ENCODE measurements at regions of chr12 and their contacts with region 1.

Region 1: GRCh38 chr12:93121729-93122488 is 192.8 kb upstream of the EEA1 start:
- DNase-seq: peak in 1 of 2 experiments; percentile 42
- H3K4me3 ChIP-seq: no peak overlapping the region
- H3K27ac ChIP-seq: peak overlapping the region; percentile 75
- H3K4me1 ChIP-seq: peaks cover 18% of the 10 kb centered on the region
- H3K27me3 ChIP-seq: no peaks in the 10 kb centered on the region
- CTCF ChIP-seq: no peak

Region 2: DNA sequence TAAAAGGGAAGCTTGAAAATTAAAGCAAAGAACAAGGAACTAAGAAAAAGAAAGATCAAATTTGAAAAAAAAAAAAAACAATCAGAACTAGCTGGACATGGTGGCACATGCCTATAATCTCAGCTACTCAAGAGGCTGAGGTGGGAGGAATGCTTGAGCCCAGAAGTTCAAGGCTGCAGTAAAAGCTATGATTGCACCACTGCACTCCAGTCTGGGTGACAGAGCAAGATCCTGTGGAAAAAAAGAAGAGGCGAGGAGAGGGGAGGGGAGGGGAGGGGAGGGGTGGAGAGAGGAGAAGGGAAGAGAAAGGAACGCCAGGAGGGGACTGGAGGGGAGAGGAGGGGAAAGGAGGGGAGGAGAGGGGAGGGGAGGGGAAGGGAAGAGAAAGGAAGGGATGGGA is 235.8 kb before region 1 on chr12:
- CTCF ChIA-PET with region 1: no interaction called
- POLR2A ChIA-PET with region 1: no interaction called
- intact Hi-C with region 1: no loop called
- DNase-seq: no peak
- H3K4me3 ChIP-seq: no peak overlapping the region
- H3K27ac ChIP-seq: no peak overlapping the region
- H3K4me1 ChIP-seq: no peaks in the 10 kb centered on the region
- H3K27me3 ChIP-seq: no peaks in the 10 kb centered on the region
- CTCF ChIP-seq: no peak

Region 3: GRCh38 chr12:93109551-93110203 is 12.2 kb before region 1 on chr12:
- CTCF ChIA-PET with region 1: interaction called, 12 read pairs
- POLR2A ChIA-PET with region 1: no interaction called
- intact Hi-C with region 1: no loop called
- DNase-seq: no peak
- H3K4me3 ChIP-seq: no peak overlapping the region
- H3K27ac ChIP-seq: no peak overlapping the region
- H3K4me1 ChIP-seq: peaks cover 7% of the 10 kb centered on the region
- H3K27me3 ChIP-seq: no peaks in the 10 kb centered on the region
- CTCF ChIP-seq: no peak

Region 4: DNA sequence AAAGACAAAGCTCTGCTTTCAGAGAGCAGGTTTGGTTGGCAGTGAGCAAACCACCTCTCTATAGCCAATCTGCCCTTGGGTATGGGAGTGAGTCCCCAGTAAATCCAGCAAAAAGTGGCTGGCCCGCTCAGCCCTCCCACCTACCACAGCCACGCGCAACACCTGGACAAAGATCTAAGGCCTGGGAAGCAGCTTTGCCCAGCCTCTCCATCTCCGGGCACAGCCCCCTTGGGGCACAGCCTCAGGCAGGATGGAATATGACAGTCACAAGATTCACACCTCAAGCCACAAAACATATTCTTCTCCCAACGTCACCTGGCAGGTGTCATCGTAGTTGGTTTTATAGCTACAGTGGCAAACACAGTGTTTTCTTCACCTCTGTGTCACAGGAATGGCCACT is 18.9 kb after region 1 on chr12:
- CTCF ChIA-PET with region 1: no interaction called
- POLR2A ChIA-PET with region 1: no interaction called
- intact Hi-C with region 1: no loop called
- DNase-seq: no peak
- H3K4me3 ChIP-seq: no peak overlapping the region
- H3K27ac ChIP-seq: no peak overlapping the region
- H3K4me1 ChIP-seq: peaks cover 65% of the 10 kb centered on the region
- H3K27me3 ChIP-seq: no peaks in the 10 kb centered on the region
- CTCF ChIP-seq: no peak

Region 5: DNA sequence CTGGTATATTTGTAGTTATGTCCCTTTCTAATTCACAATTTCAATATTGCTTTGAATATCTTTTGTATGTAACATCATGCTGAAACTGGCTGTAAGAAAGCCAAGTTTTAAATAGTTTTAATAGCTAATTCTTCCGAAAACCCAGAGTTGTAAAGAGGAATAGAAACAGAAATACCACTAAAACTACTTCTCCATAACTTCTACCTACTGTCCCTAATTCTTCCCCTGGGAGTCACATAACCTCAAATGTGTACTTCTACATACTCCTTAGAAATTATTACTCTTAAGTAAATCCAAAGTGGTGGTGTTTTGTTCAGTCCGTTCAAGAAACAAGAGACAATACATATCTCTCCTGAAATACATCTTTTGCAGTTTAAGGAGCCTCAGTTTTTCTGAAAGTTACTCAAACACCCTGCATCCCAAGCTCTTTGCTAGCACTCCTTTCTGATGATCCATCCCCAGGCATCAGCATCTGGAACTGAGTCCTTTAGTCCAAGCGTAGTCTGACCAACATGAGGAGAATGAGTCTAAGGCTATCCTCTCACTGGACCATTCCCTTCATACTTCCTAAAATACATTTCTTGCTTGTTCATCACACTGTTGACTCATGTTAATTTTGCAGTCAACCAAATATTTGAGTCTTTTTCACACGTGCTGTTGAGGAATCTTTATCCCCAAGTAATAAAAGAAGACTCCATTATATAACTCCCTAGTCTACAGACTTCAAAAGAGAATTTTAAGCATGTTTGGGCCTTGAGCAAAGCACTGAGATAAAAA is 41.5 kb after region 1 on chr12:
- CTCF ChIA-PET with region 1: no interaction called
- POLR2A ChIA-PET with region 1: no interaction called
- intact Hi-C with region 1: no loop called
- DNase-seq: peak in 1 of 2 experiments; percentile 66
- H3K4me3 ChIP-seq: no peak overlapping the region
- H3K27ac ChIP-seq: peak overlapping the region; percentile 57
- H3K4me1 ChIP-seq: peaks cover 20% of the 10 kb centered on the region
- H3K27me3 ChIP-seq: no peaks in the 10 kb centered on the region
- CTCF ChIP-seq: no peak

Region 6: DNA sequence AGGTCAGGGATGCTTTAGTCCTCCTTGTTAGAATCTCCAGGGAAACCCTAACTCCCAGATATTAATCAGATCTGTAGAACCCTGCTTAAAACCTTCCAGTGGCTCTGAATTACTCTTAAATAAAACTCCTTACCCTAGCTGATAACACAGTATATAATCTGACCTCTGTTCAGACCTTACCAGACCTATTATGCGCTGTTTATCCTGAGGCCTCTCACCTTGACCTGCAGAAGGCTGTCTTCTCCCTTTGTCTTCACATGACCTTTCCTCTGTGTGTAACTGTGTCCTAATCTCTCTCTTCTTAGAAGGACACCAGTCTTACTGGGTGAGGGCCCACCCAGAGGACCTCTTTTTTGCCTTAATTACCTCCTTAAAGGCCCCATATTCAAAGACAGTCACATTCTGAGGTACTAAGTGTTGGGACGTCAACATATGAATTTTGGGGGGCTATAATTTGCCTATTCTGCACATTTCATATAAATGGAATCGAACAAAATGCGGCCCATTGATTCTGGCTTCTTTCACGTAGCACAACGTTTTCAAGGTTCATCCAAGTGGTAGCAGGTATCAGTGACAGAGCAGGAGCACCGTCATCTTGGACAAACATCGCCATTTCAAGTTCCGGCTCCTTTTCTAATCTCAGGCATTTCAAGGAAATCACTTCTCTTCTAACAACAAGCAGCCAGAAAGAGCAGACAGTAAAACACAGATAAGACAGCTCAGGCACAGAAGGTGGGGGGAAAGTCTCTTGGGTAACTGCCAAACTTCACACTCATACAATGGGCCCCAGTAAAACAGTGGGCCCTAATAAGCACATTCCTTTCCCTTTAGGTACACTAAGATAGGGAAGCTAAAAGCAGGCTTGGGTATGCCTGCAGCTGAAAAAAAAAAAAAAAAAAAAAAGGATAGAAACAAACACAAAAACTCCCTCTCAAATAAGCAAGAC is 55.6 kb after region 1 on chr12:
- CTCF ChIA-PET with region 1: no interaction called
- POLR2A ChIA-PET with region 1: interaction called, 11 read pairs
- intact Hi-C with region 1: no loop called
- DNase-seq: no peak
- H3K4me3 ChIP-seq: no peak overlapping the region
- H3K27ac ChIP-seq: no peak overlapping the region
- H3K4me1 ChIP-seq: no peaks in the 10 kb centered on the region
- H3K27me3 ChIP-seq: no peaks in the 10 kb centered on the region
- CTCF ChIP-seq: no peak

Region 7: GRCh38 chr12:94922561-94922960 is 1800.7 kb after region 1 on chr12:
- CTCF ChIA-PET with region 1: no interaction called
- POLR2A ChIA-PET with region 1: no interaction called
- intact Hi-C with region 1: no loop called
- DNase-seq: no peak
- H3K4me3 ChIP-seq: no peak overlapping the region
- H3K27ac ChIP-seq: no peak overlapping the region
- H3K4me1 ChIP-seq: no peaks in the 10 kb centered on the region
- H3K27me3 ChIP-seq: no peaks in the 10 kb centered on the region
- CTCF ChIP-seq: no peak

Measured in PC-9 (cell line).